ENCODE measurements at regions of chr10 and their contacts with region 1.

Region 1: DNA sequence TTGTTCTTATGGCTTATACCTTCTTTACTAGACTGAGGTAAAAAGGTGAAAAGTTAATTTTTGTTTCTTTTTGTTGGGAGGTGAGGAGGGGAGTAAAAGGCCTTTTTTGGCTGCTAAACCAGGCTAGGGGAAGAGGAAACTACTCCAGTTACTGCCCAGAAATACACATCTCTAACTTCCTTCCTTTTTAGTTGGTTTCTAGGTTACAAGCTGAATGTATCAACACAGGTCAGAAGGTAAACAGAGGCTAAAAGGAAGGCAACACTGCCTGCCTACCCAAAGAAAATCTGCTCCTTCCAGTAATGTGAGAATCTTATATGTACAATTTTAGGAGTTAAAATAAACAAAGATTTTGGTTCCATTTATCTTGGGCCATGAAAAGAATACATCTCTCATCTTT is 140.5 kb downstream of the NRBF2 start:
- DNase-seq: no peak
- CTCF ChIP-seq: no peak

Region 2: GRCh38 chr10:63286754-63287264 is 13.2 kb after region 1 on chr10:
- CTCF ChIA-PET with region 1: interaction called, 54 read pairs
- POLR2A ChIA-PET with region 1: interaction called, 5 read pairs
- DNase-seq: peak; percentile 52
- CTCF ChIP-seq: no peak

Measured in GM10248 (cell line).